Psoas muscle (tissue), 8 donors: ENCODE measurements at regions of chr3 and their contacts with region 1.

Region 1: GRCh38 chr3:15498431-15499214 is 22.9 kb downstream of the COLQ start:
- DNase-seq: peak; percentile 76 to 89
- ATAC-seq: peak; percentile 87 to 89 (median 88)
- H3K4me3 ChIP-seq: no peak overlapping the region
- H3K27ac ChIP-seq: peak overlapping the region; percentile 85
- H3K4me1 ChIP-seq: peaks cover 67% of the 10 kb centered on the region
- H3K27me3 ChIP-seq: no peaks in the 10 kb centered on the region
- CTCF ChIP-seq: no peak

Region 2: DNA sequence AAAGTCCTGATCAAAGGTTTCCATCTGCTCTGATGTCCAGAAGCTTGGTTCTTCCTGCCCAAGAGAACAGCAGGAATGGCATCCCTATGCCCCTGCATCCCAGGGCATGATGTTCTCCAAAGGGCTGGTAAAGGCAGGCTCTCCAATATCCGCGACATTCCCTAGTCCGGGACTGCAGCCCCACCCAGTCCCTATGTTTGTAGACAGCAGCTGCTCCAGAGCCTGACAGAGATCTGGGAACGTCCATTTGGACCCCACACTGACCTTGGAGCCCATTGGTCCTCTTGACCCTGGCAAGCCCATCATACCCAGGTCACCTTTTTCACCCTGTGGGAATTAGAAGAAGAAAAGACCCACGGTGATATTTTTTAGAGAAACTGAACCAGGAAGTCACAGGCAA is 23.5 kb before region 1 on chr3:
- intact Hi-C with region 1: no loop called
- DNase-seq: no peak
- ATAC-seq: no peak
- H3K4me3 ChIP-seq: no peak overlapping the region
- H3K27ac ChIP-seq: no peak overlapping the region
- H3K4me1 ChIP-seq: peaks cover 12% of the 10 kb centered on the region
- H3K27me3 ChIP-seq: no peaks in the 10 kb centered on the region
- CTCF ChIP-seq: no peak

Region 3: DNA sequence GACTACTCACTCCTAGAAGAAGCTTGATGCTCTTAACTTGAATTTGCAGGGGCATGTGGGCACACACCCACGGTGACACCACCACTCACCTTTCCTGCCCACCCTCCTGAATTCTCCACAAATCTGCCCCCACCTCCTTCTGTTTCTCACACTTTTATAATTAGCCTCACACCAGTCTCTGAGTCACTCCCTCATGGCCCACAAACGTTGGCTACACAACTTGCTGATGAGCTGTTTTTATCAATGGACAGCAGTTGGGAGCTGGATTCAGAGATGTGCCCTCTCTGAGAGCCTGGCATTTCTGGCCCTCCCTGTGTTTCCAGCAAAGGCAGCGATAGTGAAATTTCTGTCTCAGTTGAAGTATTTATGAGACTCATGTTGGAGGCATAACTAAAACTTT is 21.6 kb after region 1 on chr3:
- intact Hi-C with region 1: loop called in 1 of 2 experiments (anchors 2 kb)
- DNase-seq: peak in 1 of 2 donors; percentile 60
- ATAC-seq: peak; percentile 80 to 89 (median 84)
- H3K4me3 ChIP-seq: peak overlapping the region; percentile 61
- H3K27ac ChIP-seq: peak overlapping the region; percentile 99
- H3K4me1 ChIP-seq: peaks cover 66% of the 10 kb centered on the region
- H3K27me3 ChIP-seq: no peaks in the 10 kb centered on the region
- CTCF ChIP-seq: no peak